A673 (cell line): ENCODE measurements at regions of chr10 and their contacts with region 1.

Region 1: DNA sequence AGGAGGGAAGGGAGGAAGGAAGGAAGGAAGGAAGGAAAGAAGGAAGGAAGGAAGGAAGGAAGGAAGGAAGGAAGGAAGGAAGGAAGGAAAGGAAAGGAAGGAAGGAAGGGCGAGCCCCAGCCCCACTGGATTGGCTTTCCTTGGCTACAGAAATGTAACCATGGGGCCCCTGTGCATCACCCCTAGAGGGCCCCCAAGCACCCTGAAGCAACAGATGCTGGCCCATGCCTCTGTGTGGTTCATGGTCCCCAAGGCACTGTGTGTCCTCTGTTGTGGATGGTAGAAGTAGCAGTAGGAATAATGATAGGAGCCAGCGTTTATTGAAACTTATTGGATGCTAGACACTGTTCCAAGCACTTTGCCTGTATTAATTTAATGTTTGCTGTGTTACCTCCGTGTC is 116.6 kb upstream of the MACROH2A2 start:
- DNase-seq: peak; percentile 93
- H3K4me3 ChIP-seq: no peak overlapping the region
- H3K27ac ChIP-seq: peak overlapping the region; percentile 87
- H3K4me1 ChIP-seq: peaks cover 67% of the 10 kb centered on the region
- H3K27me3 ChIP-seq: no peaks in the 10 kb centered on the region
- CTCF ChIP-seq: peak; percentile 57

Region 2: GRCh38 chr10:69948261-69948660 is 12.2 kb after region 1 on chr10:
- CTCF ChIA-PET with region 1: no interaction called
- POLR2A ChIA-PET with region 1: no interaction called
- intact Hi-C with region 1: no loop called
- DNase-seq: no peak
- H3K4me3 ChIP-seq: no peak overlapping the region
- H3K27ac ChIP-seq: no peak overlapping the region
- H3K4me1 ChIP-seq: peaks cover 20% of the 10 kb centered on the region
- H3K27me3 ChIP-seq: no peaks in the 10 kb centered on the region
- CTCF ChIP-seq: no peak

Region 3: GRCh38 chr10:70041016-70041415 is 104.9 kb after region 1 on chr10:
- CTCF ChIA-PET with region 1: no interaction called
- POLR2A ChIA-PET with region 1: interaction called, 8 read pairs
- intact Hi-C with region 1: loop called (anchors 1 kb)
- DNase-seq: peak; percentile 95
- H3K4me3 ChIP-seq: no peak overlapping the region
- H3K27ac ChIP-seq: peak overlapping the region; percentile 98
- H3K4me1 ChIP-seq: peaks cover 24% of the 10 kb centered on the region
- H3K27me3 ChIP-seq: no peaks in the 10 kb centered on the region
- CTCF ChIP-seq: no peak

Region 4: GRCh38 chr10:70381471-70382421 is 445.7 kb after region 1 on chr10:
- CTCF ChIA-PET with region 1: no interaction called
- POLR2A ChIA-PET with region 1: no interaction called
- intact Hi-C with region 1: loop called (anchors 10 kb)
- DNase-seq: peak; percentile 77
- H3K4me3 ChIP-seq: peak overlapping the region; percentile 61
- H3K27ac ChIP-seq: peak overlapping the region; percentile 76
- H3K4me1 ChIP-seq: peaks cover 23% of the 10 kb centered on the region
- H3K27me3 ChIP-seq: no peaks in the 10 kb centered on the region
- CTCF ChIP-seq: no peak